Body of pancreas (tissue), 4 donors: ENCODE measurements at regions of chr2 and their contacts with region 1.

Region 1: DNA sequence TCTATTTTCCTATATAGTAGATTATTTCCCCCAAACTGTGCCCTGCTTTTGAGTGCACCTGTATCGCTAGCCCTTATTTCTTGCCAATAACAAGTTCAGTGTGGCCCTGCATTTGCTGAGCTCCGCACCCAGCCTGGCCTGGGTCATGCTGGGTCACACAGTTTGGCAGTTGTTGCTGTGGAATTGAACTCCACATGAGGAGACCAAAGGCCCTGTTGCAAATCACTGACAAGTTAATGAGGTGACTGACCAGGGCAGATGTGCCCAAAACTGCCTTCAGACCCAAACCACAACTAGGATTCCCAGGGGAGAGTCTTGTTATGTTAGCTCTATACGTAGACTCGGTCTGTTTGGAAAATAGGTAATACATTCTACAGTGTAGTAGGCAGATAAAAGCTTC is 31.0 kb downstream of the COL4A4 start:
- DNase-seq: no peak
- ATAC-seq: no peak
- H3K4me3 ChIP-seq: no peak overlapping the region
- H3K27ac ChIP-seq: no peak overlapping the region
- H3K4me1 ChIP-seq: no peaks in the 10 kb centered on the region
- H3K27me3 ChIP-seq: no peaks in the 10 kb centered on the region
- CTCF ChIP-seq: no peak
- POLR2A ChIP-seq: no peak

Region 2: DNA sequence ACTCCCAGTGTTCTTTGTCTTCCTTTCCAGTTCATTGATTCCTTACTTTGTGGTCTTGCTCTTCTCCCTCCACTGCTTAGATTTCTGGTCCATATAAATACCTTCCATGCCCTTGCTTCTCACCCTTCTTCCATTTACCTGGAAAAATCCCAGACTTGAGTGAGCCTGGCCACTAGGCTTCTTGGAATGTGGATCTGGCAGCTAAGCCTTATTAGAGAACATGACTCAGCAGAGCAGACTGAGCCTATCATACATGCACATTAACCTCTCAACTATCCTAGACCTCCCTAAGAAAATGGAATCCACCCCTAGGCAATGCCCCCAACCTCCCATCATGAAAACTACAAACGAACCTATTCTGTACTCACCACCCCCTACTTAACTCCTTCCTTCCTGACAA is 169.5 kb before region 1 on chr2:
- intact Hi-C with region 1: no loop called
- DNase-seq: no peak
- ATAC-seq: no peak
- H3K4me3 ChIP-seq: no peak overlapping the region
- H3K27ac ChIP-seq: no peak overlapping the region
- H3K4me1 ChIP-seq: no peaks in the 10 kb centered on the region
- H3K27me3 ChIP-seq: no peaks in the 10 kb centered on the region
- CTCF ChIP-seq: no peak
- POLR2A ChIP-seq: no peak

Region 3: DNA sequence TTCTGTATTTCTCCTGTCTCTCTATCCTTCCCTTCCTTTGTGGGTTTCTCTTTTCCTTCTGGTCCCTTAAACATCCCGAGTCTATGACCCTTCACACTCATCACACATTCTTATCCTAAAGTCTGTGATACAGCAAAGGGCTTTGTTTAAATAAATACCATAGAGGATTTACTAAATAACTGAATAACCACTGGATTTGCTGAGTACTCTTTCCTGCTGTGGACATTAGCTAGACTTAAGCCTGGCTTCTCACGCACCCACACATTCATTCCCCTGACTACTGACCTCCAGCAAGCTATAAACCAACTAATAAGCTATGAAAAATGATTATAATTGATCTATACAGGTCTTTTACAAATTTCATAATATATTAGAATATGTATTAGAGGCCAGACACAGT is 108.0 kb after region 1 on chr2:
- intact Hi-C with region 1: loop called (anchors 5 kb)
- DNase-seq: no peak
- ATAC-seq: no peak
- H3K4me3 ChIP-seq: no peak overlapping the region
- H3K27ac ChIP-seq: no peak overlapping the region
- H3K4me1 ChIP-seq: no peaks in the 10 kb centered on the region
- H3K27me3 ChIP-seq: no peaks in the 10 kb centered on the region
- CTCF ChIP-seq: no peak
- POLR2A ChIP-seq: no peak

Region 4: GRCh38 chr2:227724394-227725045 is 591.5 kb after region 1 on chr2 and contains the start of gene SCYGR6:
- intact Hi-C with region 1: no loop called
- DNase-seq: no peak
- ATAC-seq: no peak
- H3K4me3 ChIP-seq: no peak within 1 kb of the TSS
- H3K27ac ChIP-seq: no peak within 1 kb of the TSS
- H3K4me1 ChIP-seq: no peaks in the 10 kb centered on the region
- H3K27me3 ChIP-seq: no peaks in the 10 kb centered on the region
- CTCF ChIP-seq: no peak
- POLR2A ChIP-seq: no peak
- total RNA-seq, gene SCYGR6: not detected